ENCODE measurements at regions of chr3 and their contacts with region 1.

Region 1: DNA sequence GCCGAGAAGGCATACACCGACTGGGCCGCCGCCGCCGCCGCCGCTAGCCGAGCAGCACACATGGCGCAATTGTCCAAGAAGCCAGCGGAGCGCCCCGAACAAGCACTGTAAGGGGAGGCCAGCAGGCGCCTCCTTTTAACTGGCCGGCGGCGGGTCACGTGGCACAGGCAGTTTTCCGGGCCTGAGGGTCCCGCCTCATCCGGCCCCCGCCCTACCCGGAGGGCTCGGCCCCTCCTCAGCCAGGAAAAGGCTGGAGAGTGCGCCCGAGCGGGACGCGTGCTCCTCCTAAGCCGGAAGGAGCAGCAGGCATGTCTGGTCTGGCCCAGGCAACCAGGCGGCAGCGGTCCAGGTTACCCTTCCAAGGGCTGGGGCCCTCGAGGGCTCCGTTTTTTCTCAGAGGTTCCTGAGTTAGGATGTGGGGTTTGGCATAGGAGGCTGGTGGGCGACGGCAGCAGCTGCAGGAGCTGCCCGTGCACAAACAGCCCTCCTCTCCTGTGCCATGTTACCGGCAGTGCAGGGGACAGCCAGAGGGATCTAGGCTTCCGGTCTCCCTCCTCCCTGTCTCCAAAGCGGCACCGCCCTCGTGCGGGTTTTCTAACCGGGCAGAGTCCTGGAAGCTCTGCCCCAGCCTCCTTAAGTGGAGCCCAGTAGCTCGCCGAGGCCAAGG is at the start of gene GPX1:
- DNase-seq: peak; percentile 90
- H3K4me3 ChIP-seq: peak within 1 kb of the TSS; percentile 68
- H3K27ac ChIP-seq: peak within 1 kb of the TSS; percentile 76
- H3K4me1 ChIP-seq: peaks cover 31% of the 10 kb centered on the region
- CTCF ChIP-seq: no peak
- total RNA-seq, gene GPX1: 77.6 and 82.3 TPM in 2 replicates

Region 2: DNA sequence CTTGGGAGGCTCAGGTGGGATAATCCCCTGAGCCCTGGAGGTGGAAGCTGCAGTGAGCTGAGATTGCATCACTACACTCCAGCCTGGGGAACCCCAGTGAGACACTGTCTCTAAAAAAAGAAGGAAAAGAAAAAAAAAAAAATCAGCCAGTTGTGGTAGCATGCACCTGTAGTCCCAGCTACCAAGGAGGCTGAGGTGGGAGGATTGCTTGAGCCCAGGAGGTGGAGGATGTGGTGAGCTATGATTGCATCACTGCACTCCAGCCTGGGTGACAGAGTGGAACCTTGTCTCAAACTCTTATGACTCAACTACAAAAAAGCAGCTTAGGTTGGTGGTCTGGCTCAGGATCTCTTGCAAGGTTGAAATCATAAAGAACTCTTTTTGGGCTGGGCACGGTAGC is 19.1 kb after region 1 on chr3:
- CTCF ChIA-PET with region 1: interaction called, 3 read pairs
- POLR2A ChIA-PET with region 1: interaction called, 5 read pairs
- intact Hi-C with region 1: loop called (anchors 1 kb)
- DNase-seq: peak; percentile 73
- H3K4me3 ChIP-seq: peak overlapping the region; percentile 13
- H3K27ac ChIP-seq: peak overlapping the region; percentile 69
- H3K4me1 ChIP-seq: peaks cover 31% of the 10 kb centered on the region
- CTCF ChIP-seq: no peak

Region 3: GRCh38 chr3:49434731-49435130 is 76.4 kb after region 1 on chr3:
- CTCF ChIA-PET with region 1: no interaction called
- POLR2A ChIA-PET with region 1: no interaction called
- intact Hi-C with region 1: no loop called
- DNase-seq: no peak
- H3K4me3 ChIP-seq: no peak overlapping the region
- H3K27ac ChIP-seq: no peak overlapping the region
- H3K4me1 ChIP-seq: peaks cover 6% of the 10 kb centered on the region
- CTCF ChIP-seq: no peak

Measured in OCI-LY7 (cell line).